CD4-positive, alpha-beta memory T cell (primary cell): ENCODE measurements at regions of chr12 and their contacts with region 1.

Region 1: GRCh38 chr12:93467351-93468007 is at the start of gene MRPL42:
- DNase-seq: peak; percentile 91 to 96 (median 92)
- H3K4me3 ChIP-seq: peak within 1 kb of the TSS; percentile 72 to 81
- H3K4me3 Mint-ChIP-seq: peak within 1 kb of the TSS; percentile 88 to 95 (median 92)
- H3K27ac ChIP-seq: peak within 1 kb of the TSS; percentile 82
- H3K27ac Mint-ChIP-seq: peak within 1 kb of the TSS; percentile 92 to 99 (median 96)
- H3K4me1 ChIP-seq: peaks cover 28% of the 10 kb centered on the region
- H3K4me1 Mint-ChIP-seq: peaks cover 24 to 38% (median 32%) of the 10 kb centered on the region in 4 donors
- H3K27me3 ChIP-seq: no peaks in the 10 kb centered on the region
- H3K27me3 Mint-ChIP-seq: no peaks in the 10 kb centered on the region
- total RNA-seq, gene MRPL42: 40.1 to 43.2 TPM

Region 2: DNA sequence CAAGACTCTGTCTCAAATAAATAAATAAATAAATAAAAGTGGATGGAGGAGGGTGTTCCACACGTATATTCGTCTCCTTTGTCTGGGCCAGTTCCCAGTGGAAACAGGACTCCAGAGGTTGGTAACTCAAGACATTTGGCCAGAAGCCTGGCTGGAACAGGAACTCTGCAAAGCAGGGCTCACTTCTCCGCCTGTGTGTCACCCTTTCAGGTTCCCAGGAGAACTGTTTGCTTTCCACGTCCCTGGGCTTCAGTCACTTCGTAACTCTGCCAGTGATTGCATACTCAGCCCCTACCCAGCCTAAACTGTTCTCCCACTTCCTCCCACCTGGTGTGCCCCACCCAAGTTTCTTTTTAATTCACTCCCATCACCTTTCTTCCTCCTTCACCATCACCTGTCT is 18.7 kb before region 1 on chr12:
- CTCF ChIA-PET with region 1: interaction called, 4 read pairs
- POLR2A ChIA-PET with region 1: no interaction called
- intact Hi-C with region 1: loop called (anchors 1 kb)
- DNase-seq: no peak
- H3K4me3 ChIP-seq: no peak overlapping the region
- H3K4me3 Mint-ChIP-seq: peak overlapping the region in 4 of 8 donors; percentile 11 to 75 (median 46)
- H3K27ac ChIP-seq: no peak overlapping the region
- H3K27ac Mint-ChIP-seq: peak overlapping the region in 5 of 7 donors; percentile 78 to 90 (median 83)
- H3K4me1 ChIP-seq: peaks cover 26% of the 10 kb centered on the region
- H3K4me1 Mint-ChIP-seq: peaks cover 19 to 22% (median 20%) of the 10 kb centered on the region in 4 donors
- H3K27me3 ChIP-seq: no peaks in the 10 kb centered on the region
- H3K27me3 Mint-ChIP-seq: peaks cover 1% of the 10 kb centered on the region in 2 donors